ENCODE measurements at regions of chr1 and their contacts with region 1.

Region 1: GRCh38 chr1:33472349-33472980 is at the start of gene ZSCAN20:
- DNase-seq: peak; percentile 99
- H3K4me3 ChIP-seq: peak within 1 kb of the TSS; percentile 70 to 73 (median 72)
- H3K27ac ChIP-seq: peak within 1 kb of the TSS; percentile 63
- H3K4me1 ChIP-seq: peaks cover 13% of the 10 kb centered on the region
- H3K27me3 ChIP-seq: no peaks in the 10 kb centered on the region
- CTCF ChIP-seq: no peak
- POLR2A ChIP-seq: peak; percentile 71
- total RNA-seq, gene ZSCAN20: 4.7 and 5.8 TPM in 2 replicates

Region 2: GRCh38 chr1:33137800-33138199 is 334.7 kb before region 1 on chr1:
- CTCF ChIA-PET with region 1: interaction called, 29 read pairs
- POLR2A ChIA-PET with region 1: no interaction called
- dilution Hi-C with region 1: no loop called
- intact Hi-C with region 1: loop called (anchors 1 kb)
- DNase-seq: peak; percentile 50
- H3K4me3 ChIP-seq: no peak overlapping the region
- H3K27ac ChIP-seq: no peak overlapping the region
- H3K4me1 ChIP-seq: no peaks in the 10 kb centered on the region
- H3K27me3 ChIP-seq: peaks cover 2 to 3% of the 10 kb centered on the region in 2 experiments
- CTCF ChIP-seq: peak; percentile 51 to 80
- POLR2A ChIP-seq: no peak

Region 3: DNA sequence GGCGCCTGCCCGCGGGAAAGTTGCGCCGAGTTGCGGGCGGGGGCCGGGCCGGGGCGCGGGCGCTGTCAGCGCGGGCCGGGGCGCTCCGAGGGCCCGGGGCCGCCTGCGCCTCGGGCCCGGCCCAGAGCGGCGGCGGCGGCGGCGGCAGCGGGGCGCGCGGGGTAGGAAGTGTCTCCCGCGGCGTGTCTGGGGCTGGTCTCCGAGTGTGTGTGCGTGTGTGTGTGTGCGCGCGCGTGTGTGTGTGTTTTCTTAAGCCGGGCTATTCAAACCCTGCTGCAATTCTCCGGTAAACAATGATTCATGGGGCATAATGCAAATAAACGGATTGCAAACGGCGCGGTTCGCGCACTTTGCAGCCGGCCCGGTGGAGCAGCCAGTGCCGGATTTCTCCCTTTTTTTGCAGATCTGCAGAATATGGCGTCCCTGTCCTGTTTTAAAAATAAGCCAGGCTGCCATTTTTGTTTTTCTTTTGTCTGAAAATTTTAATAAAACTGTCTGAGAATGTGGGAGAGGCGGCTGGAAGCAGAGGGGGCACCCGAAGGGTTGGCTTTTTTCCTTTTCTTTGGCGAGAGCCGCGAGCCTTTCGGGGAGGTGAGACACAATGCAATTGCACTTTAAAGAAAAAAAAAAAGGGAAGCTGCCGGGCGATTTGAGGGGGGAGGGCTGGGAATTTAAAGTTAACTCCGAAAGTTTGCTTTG is 215.6 kb before region 1 on chr1:
- CTCF ChIA-PET with region 1: no interaction called
- POLR2A ChIA-PET with region 1: no interaction called
- dilution Hi-C with region 1: no loop called
- intact Hi-C with region 1: loop called (anchors 1 kb)
- DNase-seq: peak; percentile 65
- H3K4me3 ChIP-seq: peak overlapping the region; percentile 79 to 88 (median 81)
- H3K27ac ChIP-seq: peak overlapping the region; percentile 76
- H3K4me1 ChIP-seq: peaks cover 12% of the 10 kb centered on the region
- H3K27me3 ChIP-seq: no peaks in the 10 kb centered on the region
- CTCF ChIP-seq: no peak
- POLR2A ChIP-seq: peak; percentile 17

Region 4: DNA sequence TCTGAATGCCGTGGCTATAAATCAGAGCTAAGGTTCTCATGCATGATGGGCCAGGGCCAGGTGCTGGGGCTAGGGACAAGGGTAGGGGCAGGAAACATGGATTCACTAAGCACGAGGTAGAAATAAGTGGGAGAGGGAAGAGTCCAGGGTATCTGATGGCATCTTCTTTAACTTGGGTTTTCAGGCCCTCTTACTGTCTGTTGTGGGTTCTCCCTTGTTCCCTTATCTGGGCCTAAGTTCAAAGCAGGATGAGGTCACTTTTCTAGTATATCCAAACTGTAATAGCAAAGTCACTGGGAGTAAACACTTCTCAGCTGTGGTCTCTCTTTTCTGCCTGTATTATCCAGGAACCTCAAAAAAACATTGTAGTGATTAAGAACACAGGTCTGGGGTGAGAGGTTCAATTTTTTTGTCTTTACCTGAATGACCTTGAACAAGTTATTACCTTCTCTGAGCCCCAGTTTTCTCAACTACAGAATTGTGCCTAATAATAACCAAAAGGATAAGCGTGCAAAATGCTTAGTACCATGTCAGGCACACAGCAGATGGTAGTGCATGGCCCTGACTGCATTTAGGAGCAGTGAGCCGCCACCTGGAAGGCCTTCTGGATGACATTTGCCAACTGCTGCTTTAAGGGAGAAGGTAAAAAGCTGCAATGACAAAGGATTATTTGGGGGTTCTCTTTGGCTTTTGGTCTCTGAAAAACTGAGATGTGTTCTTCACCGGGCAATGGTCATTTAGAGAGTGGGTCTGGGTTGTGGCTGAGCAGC is 97.9 kb before region 1 on chr1:
- CTCF ChIA-PET with region 1: interaction called, 27 read pairs
- POLR2A ChIA-PET with region 1: no interaction called
- dilution Hi-C with region 1: no loop called
- intact Hi-C with region 1: no loop called
- DNase-seq: no peak
- H3K4me3 ChIP-seq: no peak overlapping the region
- H3K27ac ChIP-seq: no peak overlapping the region
- H3K4me1 ChIP-seq: no peaks in the 10 kb centered on the region
- H3K27me3 ChIP-seq: no peaks in the 10 kb centered on the region
- CTCF ChIP-seq: no peak
- POLR2A ChIP-seq: no peak

Region 5: DNA sequence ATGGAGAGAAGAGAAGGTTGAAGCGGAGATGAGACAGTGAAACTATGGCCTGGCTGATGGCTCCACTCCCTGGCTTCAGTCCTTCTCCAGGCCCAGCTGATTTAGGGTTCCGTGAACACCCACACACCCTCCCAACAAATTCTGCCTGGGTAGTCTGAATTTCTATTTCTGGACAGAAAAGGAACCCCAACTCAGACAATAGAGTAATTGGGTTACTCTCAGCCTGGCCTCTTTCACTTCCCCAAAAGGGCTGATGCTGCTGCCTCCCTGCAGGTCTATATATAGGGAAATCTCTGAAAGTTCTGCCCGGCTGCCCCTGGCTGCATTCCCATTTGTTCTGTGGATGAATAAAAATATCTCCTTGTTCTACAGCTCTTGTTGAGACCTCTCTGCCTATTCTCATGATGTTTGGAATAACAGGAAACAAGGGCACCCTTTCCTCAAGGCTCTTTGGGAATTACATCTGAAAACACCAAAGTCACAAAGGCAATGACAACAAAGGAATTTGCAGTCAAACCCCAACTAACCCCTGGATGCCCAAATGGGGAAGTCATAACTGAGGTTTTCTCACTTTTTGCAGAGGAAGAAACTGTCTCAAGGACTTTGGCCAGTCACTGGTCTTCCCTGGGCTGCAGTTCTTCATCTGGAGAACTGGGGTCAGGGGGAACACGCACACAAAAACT is 11.4 kb before region 1 on chr1:
- CTCF ChIA-PET with region 1: interaction called, 37 read pairs
- POLR2A ChIA-PET with region 1: no interaction called
- dilution Hi-C with region 1: no loop called
- intact Hi-C with region 1: no loop called
- DNase-seq: peak; percentile 65
- H3K4me3 ChIP-seq: no peak overlapping the region
- H3K27ac ChIP-seq: no peak overlapping the region
- H3K4me1 ChIP-seq: peaks cover 16% of the 10 kb centered on the region
- H3K27me3 ChIP-seq: no peaks in the 10 kb centered on the region
- CTCF ChIP-seq: no peak
- POLR2A ChIP-seq: no peak